ENCODE measurements at regions of chr6 and their contacts with region 1.

Region 1: GRCh38 chr6:20991910-20992309 is 457.7 kb downstream of the CDKAL1 start:
- DNase-seq: no peak
- H3K4me3 ChIP-seq: no peak overlapping the region
- H3K27ac ChIP-seq: no peak overlapping the region
- H3K27me3 ChIP-seq: no peaks in the 10 kb centered on the region
- CTCF ChIP-seq: no peak

Region 2: GRCh38 chr6:21003780-21004541 is 12.1 kb after region 1 on chr6:
- CTCF ChIA-PET with region 1: interaction called, 4 read pairs
- POLR2A ChIA-PET with region 1: interaction called, 11 read pairs
- DNase-seq: peak; percentile 62
- H3K4me3 ChIP-seq: no peak overlapping the region
- H3K27ac ChIP-seq: peak overlapping the region; percentile 33
- H3K27me3 ChIP-seq: no peaks in the 10 kb centered on the region
- CTCF ChIP-seq: no peak

Measured in AG04450 (cell line).